Activated CD4-positive, alpha-beta T cell treated with anti-CD3 and anti-CD28 coated beads, Interleukin-2, amount 10 ng/mL, durations not matched to agents 7 days and 5 days (primary cell): ENCODE measurements at regions of chr16 and their contacts with region 1.

Region 1: DNA sequence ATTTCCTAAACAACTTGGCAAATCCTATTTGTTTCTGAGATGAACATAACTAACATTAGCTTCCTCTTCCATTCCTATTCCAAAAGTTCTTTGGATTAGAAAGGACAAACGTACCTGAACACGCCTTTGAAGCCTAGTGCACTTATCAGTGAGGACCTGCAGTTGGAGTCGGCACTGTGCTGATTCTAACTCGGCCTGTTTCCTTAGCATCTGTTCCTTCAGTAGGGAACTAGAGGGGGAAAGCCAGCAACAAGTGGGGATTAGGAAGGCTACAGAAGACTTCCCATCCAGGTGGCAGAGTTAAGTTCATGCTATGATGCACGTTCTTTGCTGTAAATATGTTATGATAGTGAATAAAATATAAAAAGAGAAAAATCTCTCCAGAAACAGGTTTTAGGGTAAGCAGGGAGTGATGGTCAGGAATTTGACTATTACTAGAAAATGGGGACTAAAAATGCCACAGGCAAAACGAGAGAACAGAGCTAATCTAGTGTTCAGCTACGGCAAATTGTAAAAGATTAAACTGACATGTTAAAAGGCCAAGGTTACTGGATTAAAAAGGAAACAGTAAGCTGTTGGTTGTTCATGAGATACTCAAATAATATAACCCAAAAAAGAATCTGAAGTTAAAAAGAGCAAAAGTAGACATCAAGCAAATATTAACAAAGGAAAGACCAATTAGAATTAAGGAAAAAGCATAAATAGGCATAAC is 28.8 kb downstream of the RFWD3 start:
- DNase-seq: no peak
- H3K4me3 Mint-ChIP-seq: no peak overlapping the region
- H3K27ac Mint-ChIP-seq: no peak overlapping the region
- H3K4me1 Mint-ChIP-seq: no peaks in the 10 kb centered on the region
- H3K27me3 Mint-ChIP-seq: no peaks in the 10 kb centered on the region

Region 2: DNA sequence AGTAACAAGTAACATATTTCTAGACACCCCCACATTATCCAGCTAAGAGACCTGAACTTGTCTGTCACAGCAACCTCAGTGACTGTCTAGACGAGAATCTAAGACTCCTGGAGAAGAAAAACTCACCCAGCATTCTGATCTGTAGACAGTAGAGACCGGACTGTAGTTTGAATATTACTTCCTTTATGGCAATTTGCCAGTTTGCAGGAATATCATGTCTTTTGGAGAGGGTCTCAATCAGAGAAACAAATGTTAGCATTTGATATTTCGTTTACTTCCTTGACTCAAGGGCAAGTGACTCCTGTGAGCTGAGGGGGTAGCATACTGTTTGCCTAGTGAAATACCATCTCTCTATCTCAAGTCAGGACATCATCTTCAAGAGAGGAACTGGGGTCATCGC is 21.1 kb before region 1 on chr16:
- CTCF ChIA-PET with region 1: no interaction called
- POLR2A ChIA-PET with region 1: no interaction called
- DNase-seq: no peak
- H3K4me3 Mint-ChIP-seq: no peak overlapping the region
- H3K27ac Mint-ChIP-seq: no peak overlapping the region
- H3K4me1 Mint-ChIP-seq: peaks cover 6% of the 10 kb centered on the region
- H3K27me3 Mint-ChIP-seq: no peaks in the 10 kb centered on the region

Region 3: GRCh38 chr16:74626741-74627416 is 11.0 kb before region 1 on chr16:
- CTCF ChIA-PET with region 1: interaction called, 11 read pairs
- POLR2A ChIA-PET with region 1: no interaction called
- DNase-seq: no peak
- H3K4me3 Mint-ChIP-seq: no peak overlapping the region
- H3K27ac Mint-ChIP-seq: no peak overlapping the region
- H3K4me1 Mint-ChIP-seq: peaks cover 20% of the 10 kb centered on the region
- H3K27me3 Mint-ChIP-seq: no peaks in the 10 kb centered on the region